ENCODE measurements at regions of chr6 and their contacts with region 1.

Region 1: DNA sequence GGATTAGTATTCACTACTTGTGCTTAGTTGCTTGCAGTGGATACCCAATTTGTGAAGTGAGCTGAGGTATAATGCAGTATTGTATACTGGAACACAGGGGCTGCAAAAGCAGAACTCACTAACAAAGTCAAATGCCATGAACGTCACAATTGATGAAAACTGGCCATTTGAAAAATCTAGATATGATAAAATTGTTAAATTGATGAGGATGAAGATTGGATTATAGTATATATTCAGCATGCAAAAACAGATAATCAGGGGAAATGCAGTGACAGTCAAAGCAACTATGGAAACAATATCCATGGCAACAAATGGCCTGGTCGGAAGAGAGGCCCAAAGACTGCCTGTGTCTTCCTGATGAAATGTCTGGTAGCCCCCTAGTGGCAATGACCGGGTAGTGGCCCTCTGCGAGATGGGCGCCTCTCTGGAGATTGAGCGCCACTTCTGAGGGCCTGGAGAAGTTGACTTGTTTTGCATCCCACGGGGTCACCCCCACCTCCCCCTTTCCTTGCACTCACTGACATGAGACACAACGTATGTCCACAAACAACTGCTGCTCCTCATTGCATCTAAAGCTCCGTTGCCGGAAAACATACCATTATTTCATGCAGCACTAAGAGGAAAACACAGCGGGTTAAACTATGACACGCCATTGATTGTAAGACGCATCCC is 43.6 kb downstream of the C6orf15 start:
- DNase-seq: no peak
- H3K4me3 ChIP-seq: no peak overlapping the region
- CTCF ChIP-seq: peak; percentile 93

Region 2: GRCh38 chr6:30828027-30828960 is 240.5 kb before region 1 on chr6:
- CTCF ChIA-PET with region 1: interaction called, 55 read pairs
- POLR2A ChIA-PET with region 1: no interaction called
- DNase-seq: peak; percentile 70
- H3K4me3 ChIP-seq: no peak overlapping the region
- CTCF ChIP-seq: peak; percentile 90

Region 3: DNA sequence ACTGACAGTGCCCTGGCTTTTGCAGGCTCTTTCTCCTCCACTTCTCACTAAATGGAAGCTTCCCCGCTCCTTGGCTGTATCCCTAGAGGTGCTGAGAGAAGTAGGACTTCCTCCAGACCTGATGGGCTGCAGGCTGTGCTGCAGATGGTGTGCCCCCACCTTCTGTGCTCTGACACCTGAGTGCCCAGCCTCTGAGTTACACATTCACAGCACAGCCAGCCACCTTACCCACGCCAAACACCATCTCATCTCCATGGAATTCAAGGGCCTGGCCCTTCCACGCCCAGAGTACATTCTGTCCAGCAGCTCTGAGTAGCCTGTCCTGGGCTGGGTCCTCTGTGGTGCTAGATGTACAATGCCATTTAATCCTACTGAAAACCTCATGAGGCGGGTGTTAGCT is 142.2 kb before region 1 on chr6:
- CTCF ChIA-PET with region 1: interaction called, 1,346 read pairs
- POLR2A ChIA-PET with region 1: no interaction called
- DNase-seq: no peak
- H3K4me3 ChIP-seq: no peak overlapping the region
- CTCF ChIP-seq: no peak

Region 4: DNA sequence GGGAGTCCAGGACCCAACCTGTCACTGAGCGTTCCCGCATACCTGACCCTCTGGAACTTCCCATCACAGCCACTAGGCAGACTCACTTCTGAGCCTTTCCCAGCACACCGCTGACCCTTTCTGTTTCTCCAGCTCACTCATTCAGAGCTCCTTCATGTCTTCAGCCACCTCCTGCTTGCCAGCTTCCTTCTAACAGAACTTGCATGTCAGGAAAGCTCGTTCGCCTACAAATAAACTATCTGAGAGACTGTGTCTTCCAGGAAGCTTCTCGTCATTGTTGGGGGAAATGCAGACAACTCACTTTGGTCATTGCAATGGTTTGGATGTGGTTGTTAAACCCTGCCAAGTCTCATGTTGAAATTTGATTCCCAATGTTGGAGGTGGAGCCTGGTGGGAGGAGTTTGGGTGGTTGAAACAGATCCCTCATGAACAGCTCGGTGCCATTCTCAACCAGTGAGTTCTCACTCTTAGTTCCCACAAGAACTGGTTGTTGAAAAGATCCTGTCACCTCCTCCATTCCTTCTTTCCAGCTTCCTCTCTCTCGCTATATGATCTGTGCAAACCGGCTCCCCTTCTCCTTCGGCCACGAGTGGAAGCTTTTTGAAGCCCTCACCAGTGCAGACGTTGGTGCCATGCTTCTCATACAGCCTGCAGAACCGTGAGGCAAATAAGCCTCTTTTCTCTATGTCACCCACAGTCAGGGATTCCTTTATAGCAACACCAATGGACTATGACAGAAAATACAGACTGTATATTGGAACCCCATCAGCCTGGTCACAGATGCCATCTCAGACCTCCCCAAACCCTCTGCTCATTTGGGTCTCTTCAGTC is 86.6 kb before region 1 on chr6:
- CTCF ChIA-PET with region 1: interaction called, 11 read pairs
- POLR2A ChIA-PET with region 1: no interaction called
- DNase-seq: peak; percentile 23
- H3K4me3 ChIP-seq: peak overlapping the region; percentile 49
- CTCF ChIP-seq: peak; percentile 44

Region 5: DNA sequence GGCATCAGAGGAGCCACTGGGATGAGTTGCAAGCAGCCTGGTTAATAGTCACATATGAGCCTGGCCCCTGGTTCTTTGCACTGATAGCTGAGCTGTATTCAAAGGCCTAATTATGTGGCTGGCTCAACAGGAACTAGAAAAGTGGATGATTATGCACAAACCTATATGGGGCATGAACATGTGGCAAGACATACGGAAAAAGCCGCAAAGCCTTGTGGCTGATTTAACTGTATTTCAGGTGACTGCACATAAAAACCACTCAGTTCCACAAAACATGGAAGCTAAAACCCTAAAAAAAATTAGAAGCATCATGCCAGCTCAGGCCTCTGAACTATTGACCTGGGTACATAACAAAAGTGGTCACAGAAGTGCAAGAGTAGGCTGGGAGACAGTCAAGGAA is 71.5 kb before region 1 on chr6:
- CTCF ChIA-PET with region 1: no interaction called
- POLR2A ChIA-PET with region 1: no interaction called
- DNase-seq: no peak
- H3K4me3 ChIP-seq: no peak overlapping the region
- CTCF ChIP-seq: no peak

Region 6: GRCh38 chr6:31058128-31058894 is 10.5 kb before region 1 on chr6:
- CTCF ChIA-PET with region 1: interaction called, 68 read pairs
- POLR2A ChIA-PET with region 1: no interaction called
- DNase-seq: peak; percentile 79
- H3K4me3 ChIP-seq: no peak overlapping the region
- CTCF ChIP-seq: peak; percentile 53

Region 7: DNA sequence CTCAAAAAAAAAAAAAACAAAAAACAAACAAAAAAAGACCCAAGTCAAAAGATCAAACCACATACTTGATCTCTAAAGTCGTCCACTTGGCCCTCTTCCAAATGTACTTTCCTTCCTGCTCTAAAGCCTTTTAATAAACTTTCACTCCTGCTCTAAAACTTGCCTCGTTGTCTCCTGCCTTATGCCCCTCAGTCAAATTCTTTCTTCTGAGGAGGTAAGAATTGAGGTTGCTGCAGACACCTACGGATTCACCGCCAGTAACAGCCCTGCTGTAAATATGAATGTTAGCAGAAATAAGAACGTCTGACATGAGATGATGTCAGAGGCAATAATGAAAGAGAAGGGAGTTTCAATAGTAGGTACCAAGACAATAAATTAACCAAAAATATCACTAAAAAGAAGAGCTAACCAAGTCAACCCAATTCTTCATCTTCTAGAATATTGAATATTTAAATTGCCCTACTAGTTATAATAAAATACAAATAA is 28.8 kb after region 1 on chr6:
- CTCF ChIA-PET with region 1: interaction called, 34 read pairs
- POLR2A ChIA-PET with region 1: no interaction called
- DNase-seq: no peak
- H3K4me3 ChIP-seq: no peak overlapping the region
- CTCF ChIP-seq: no peak

Measured in AG04449 (cell line).